ENCODE measurements at regions of chr15 and their contacts with region 1.

Region 1: GRCh38 chr15:98369081-98369716 is 279.1 kb upstream of the IGF1R start:
- DNase-seq: no peak
- H3K4me3 ChIP-seq: no peak overlapping the region
- H3K27me3 ChIP-seq: no peaks in the 10 kb centered on the region
- CTCF ChIP-seq: no peak

Region 2: GRCh38 chr15:98147415-98147814 is 221.8 kb before region 1 on chr15:
- CTCF ChIA-PET with region 1: no interaction called
- POLR2A ChIA-PET with region 1: no interaction called
- DNase-seq: no peak
- H3K4me3 ChIP-seq: no peak overlapping the region
- H3K27me3 ChIP-seq: no peaks in the 10 kb centered on the region
- CTCF ChIP-seq: no peak

Region 3: GRCh38 chr15:98358971-98359370 is 10.2 kb before region 1 on chr15:
- CTCF ChIA-PET with region 1: no interaction called
- POLR2A ChIA-PET with region 1: no interaction called
- DNase-seq: no peak
- H3K4me3 ChIP-seq: no peak overlapping the region
- H3K27me3 ChIP-seq: no peaks in the 10 kb centered on the region
- CTCF ChIP-seq: no peak

Region 4: DNA sequence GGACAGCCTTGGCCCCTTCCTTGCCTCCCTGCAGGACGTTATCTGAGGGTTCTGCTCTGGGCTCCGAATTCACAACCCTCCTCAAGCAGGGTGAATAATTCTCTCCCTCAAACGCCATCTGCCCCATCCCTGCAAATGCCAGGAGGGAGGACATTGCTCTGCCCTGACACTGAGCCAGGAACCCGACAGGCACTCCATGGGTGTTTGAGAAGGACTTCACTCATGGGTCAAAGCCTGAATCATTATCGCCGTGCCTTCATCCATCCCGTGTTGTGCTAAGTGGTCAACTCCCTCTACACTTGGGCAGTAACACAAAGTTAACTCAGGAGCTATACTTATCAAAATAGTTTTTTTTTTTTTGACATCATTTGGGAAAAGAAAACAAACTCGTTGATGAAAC is 17.4 kb after region 1 on chr15:
- CTCF ChIA-PET with region 1: no interaction called
- POLR2A ChIA-PET with region 1: interaction called, 14 read pairs
- DNase-seq: no peak
- H3K4me3 ChIP-seq: no peak overlapping the region
- H3K27me3 ChIP-seq: no peaks in the 10 kb centered on the region
- CTCF ChIP-seq: no peak

Measured in BJ (cell line).